Left colon (tissue), 2 donors: ENCODE measurements at regions of chr4 and their contacts with region 1.

Region 1: GRCh38 chr4:18689308-18690115 is 668.0 kb upstream of the LCORL start:
- DNase-seq: peak in 1 of 2 donors; percentile 46
- ATAC-seq: peak; percentile 58

Region 2: DNA sequence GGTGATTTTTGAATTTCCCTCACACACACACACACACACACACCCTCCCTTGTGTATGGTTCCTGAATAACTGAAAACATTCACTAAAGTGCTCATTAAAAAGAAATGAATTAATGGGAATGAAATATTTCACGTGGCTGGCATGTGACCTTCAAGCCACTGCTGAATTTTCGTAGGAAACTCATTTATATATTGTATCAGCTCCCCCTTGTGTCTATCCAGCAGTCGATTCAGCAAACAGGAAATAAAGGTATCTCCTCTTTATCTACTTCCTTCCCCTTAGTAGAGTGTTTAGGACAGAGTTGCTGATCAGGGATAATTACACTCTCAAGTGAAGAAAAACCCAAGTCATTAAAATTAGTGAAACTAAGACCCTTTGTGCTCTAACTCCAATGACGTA is 244.7 kb after region 1 on chr4:
- intact Hi-C with region 1: loop called in 1 of 2 experiments (anchors 10 kb)
- DNase-seq: no peak
- ATAC-seq: no peak